ENCODE measurements at regions of chr20 and their contacts with region 1.

Region 1: DNA sequence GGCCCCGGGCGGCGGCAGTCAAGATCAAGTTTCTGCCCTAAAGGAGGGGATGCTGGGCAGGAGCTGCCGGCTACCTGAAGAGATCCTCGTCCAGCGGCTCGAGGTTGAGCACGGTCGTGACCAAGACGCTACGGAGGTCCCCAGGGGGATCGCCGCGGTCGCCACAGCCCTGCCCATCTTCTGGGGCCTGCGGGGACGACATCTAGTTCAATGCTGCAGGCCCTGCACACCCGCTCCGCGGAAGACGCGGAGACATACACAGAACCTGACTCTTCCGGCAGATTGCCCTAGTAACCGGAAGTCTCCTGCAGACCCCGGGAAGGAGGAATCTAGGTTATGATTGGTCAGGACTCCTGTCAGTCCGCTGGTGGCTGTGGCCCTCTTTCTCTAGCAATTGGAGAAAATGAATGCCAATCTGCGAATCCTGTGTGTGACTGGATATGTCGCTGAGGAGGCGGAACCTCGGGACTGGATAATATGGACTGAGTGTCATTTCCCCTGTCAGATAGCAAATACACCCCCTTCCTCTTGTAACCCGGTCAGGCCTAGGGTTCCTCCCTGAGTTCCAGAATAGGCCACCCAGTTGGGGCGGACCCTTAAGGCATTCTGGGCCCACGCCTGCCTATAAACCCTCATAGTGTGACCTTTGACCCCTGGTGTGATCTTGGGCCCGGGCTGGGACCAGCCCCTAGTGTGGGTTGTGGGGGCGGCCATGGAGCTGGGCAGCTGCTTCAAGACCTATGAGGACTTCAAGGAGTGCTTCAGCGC is at the starts of genes ACOT8 and ZSWIM3:
- DNase-seq: peak; percentile 100
- H3K4me3 ChIP-seq: peak within 1 kb of the TSS; percentile 65
- H3K4me3 Mint-ChIP-seq: peak within 1 kb of the TSS; percentile 95
- H3K27ac Mint-ChIP-seq: peak within 1 kb of the TSS; percentile 85
- H3K4me1 ChIP-seq: peaks cover 17% of the 10 kb centered on the region
- H3K4me1 Mint-ChIP-seq: peaks cover 19% of the 10 kb centered on the region
- H3K27me3 ChIP-seq: no peaks in the 10 kb centered on the region
- H3K27me3 Mint-ChIP-seq: no peaks in the 10 kb centered on the region
- CTCF ChIP-seq: no peak
- total RNA-seq, gene ACOT8: 35.1 and 36.2 TPM in 2 replicates
- total RNA-seq, gene ZSWIM3: 6.1 and 6.4 TPM in 2 replicates

Region 2: GRCh38 chr20:45415774-45416637 is 441.3 kb before region 1 on chr20 and contains the start of gene PIGT:
- CTCF ChIA-PET with region 1: no interaction called
- POLR2A ChIA-PET with region 1: no interaction called
- intact Hi-C with region 1: loop called (anchors 1 kb)
- DNase-seq: peak; percentile 95
- H3K4me3 ChIP-seq: peak within 1 kb of the TSS; percentile 89
- H3K4me3 Mint-ChIP-seq: peak within 1 kb of the TSS; percentile 87
- H3K27ac Mint-ChIP-seq: peak within 1 kb of the TSS; percentile 92
- H3K4me1 ChIP-seq: peaks cover 13% of the 10 kb centered on the region; the same call in 1 of the 2 replicates
- H3K4me1 Mint-ChIP-seq: peaks cover 6% of the 10 kb centered on the region
- H3K27me3 ChIP-seq: no peaks in the 10 kb centered on the region
- H3K27me3 Mint-ChIP-seq: no peaks in the 10 kb centered on the region
- CTCF ChIP-seq: peak in 1 of 2 experiments; percentile 30
- total RNA-seq, gene PIGT: 239 and 259 TPM in 2 replicates

Region 3: DNA sequence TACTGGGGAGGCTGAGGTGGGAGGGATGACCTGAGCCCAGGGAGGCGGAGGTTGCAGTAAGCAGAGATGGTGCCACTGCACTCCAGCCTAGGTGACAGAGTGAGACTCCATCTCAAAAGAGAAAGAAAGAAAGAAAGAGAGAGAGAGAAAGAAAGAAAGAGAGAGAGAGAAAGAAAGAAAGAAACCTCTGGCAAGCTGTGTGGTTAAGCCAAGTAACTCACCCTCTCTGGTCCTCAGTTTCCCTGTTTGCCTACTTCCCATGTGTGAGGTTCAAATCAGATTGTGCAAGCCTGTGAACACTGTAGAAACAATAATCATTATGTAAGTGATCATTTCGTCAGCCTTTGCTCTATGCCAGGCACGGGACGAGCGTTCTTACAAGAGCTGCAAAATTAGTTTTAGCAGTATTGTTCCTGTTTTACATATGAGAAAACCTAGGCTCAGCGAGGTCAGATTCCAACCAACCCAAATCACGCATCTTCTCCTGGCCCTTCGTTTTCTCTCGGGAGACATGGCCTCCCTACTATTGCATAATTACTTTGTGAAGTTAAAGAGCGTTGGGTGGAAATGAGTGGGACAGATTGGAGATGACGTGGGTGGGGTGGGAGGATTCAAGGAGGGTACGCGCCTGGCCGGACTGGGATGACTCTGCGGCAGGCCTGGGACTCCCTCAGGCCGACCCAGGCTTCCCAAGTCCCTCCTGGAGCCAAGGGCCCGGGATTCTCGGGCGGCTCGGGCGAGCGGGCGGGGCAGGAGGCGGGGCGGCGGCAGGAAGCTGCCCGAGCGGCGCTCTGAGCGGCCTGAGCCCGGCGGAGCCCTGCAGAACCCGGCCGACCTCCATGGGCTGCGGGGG is 24.0 kb before region 1 on chr20 and contains the start of gene SNX21:
- CTCF ChIA-PET with region 1: no interaction called
- POLR2A ChIA-PET with region 1: interaction called, 7 read pairs
- intact Hi-C with region 1: loop called (anchors 1 kb)
- DNase-seq: peak; percentile 94 to 95
- H3K4me3 ChIP-seq: peak within 1 kb of the TSS; percentile 86
- H3K4me3 Mint-ChIP-seq: peak within 1 kb of the TSS; percentile 71
- H3K27ac Mint-ChIP-seq: peak within 1 kb of the TSS; percentile 53
- H3K4me1 ChIP-seq: peaks cover 13% of the 10 kb centered on the region
- H3K4me1 Mint-ChIP-seq: peaks cover 15% of the 10 kb centered on the region
- H3K27me3 ChIP-seq: no peaks in the 10 kb centered on the region
- H3K27me3 Mint-ChIP-seq: no peaks in the 10 kb centered on the region
- CTCF ChIP-seq: no peak
- total RNA-seq, gene SNX21: 14.1 and 15.6 TPM in 2 replicates

Region 4: DNA sequence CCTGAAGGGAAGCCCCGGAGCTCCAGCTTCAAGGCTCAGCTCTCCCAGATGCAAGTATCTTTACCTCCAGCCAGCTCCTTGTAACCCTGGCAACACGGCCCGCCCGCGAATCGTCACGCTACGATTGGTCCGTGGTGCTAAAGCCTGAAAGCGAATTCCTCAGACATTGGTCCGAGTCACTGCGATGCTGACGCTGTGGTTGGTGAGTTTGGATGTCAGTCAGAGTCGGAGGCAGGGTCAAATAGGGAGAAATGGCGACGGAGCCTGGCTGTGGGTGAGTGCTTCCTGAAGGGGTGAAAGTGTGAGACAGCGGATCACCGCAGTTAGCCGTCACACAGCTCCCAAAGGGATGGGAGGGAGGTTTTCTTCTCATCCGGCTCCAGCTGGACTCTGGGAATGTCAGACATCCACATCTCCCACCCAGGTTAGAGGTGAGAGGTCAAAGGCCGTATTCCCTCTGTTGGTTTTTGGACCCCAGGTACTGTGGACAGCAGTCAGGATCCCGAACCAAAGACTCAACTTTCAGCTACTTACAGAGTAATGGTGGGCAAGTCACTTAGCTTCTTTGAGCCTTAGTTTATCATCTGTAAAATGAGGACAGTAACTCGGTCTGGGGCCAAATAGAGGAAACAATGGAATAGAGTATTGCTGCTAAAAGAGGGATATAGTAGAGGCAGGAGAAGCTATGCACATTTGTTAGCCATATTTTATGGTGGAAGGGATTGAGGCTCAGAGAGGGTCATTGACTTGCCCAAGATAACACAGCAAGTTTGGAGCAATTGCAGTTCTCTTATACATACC is 23.9 kb after region 1 on chr20 and contains the start of gene ZSWIM1:
- CTCF ChIA-PET with region 1: interaction called, 4 read pairs
- POLR2A ChIA-PET with region 1: interaction called, 7 read pairs
- intact Hi-C with region 1: loop called (anchors 1 kb)
- DNase-seq: peak; percentile 100
- H3K4me3 ChIP-seq: peak within 1 kb of the TSS; percentile 66
- H3K4me3 Mint-ChIP-seq: peak within 1 kb of the TSS; percentile 96
- H3K27ac Mint-ChIP-seq: peak within 1 kb of the TSS; percentile 95
- H3K4me1 ChIP-seq: no peaks in the 10 kb centered on the region
- H3K4me1 Mint-ChIP-seq: peaks cover 19% of the 10 kb centered on the region
- H3K27me3 ChIP-seq: no peaks in the 10 kb centered on the region
- H3K27me3 Mint-ChIP-seq: no peaks in the 10 kb centered on the region
- CTCF ChIP-seq: no peak
- total RNA-seq, gene ZSWIM1: 24.8 and 27.3 TPM in 2 replicates

Measured in Caco-2 (cell line).